Aorta (tissue), 5 donors: ENCODE measurements at regions of chr11 and their contacts with region 1.

Region 1: DNA sequence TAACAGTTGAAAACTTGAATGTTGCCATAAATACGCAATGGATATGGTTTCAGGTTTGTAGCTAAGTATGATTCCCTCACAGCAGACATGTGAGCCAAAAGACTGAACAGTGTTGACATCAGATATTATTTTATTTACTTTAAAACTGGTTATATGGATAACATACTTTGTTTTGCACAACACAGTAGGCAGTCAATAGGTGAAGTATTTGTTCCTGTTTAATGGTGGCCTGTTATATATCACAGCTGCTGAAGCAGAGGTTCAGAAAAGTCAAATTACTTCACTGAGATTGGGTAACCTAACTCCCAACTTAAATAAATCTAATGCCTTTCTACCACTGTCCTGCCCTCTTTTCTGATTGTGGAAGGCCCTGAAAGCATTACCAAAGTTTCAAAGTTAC is 44.6 kb downstream of the YAP1 start:
- DNase-seq: no peak
- ATAC-seq: no peak
- H3K4me3 ChIP-seq: no peak overlapping the region
- H3K27ac ChIP-seq: no peak overlapping the region
- H3K4me1 ChIP-seq: peaks cover 5 to 16% of the 10 kb centered on the region in 2 donors
- H3K27me3 ChIP-seq: no peaks in the 10 kb centered on the region

Region 2: GRCh38 chr11:102115557-102115956 is 39.2 kb before region 1 on chr11:
- intact Hi-C with region 1: loop called in 1 of 2 experiments (anchors 5 kb)
- DNase-seq: no peak
- ATAC-seq: no peak
- H3K4me3 ChIP-seq: peak overlapping the region in 1 of 2 donors; percentile 14
- H3K27ac ChIP-seq: no peak overlapping the region
- H3K4me1 ChIP-seq: peaks cover 3 to 7% of the 10 kb centered on the region in 2 donors
- H3K27me3 ChIP-seq: no peaks in the 10 kb centered on the region

Region 3: GRCh38 chr11:102279641-102280170 is 124.9 kb after region 1 on chr11:
- intact Hi-C with region 1: no loop called
- DNase-seq: no peak
- ATAC-seq: peak; percentile 54
- H3K4me3 ChIP-seq: no peak overlapping the region
- H3K27ac ChIP-seq: peak overlapping the region in 1 of 2 donors; percentile 28
- H3K4me1 ChIP-seq: peaks cover 0 to 3% of the 10 kb centered on the region in 2 donors
- H3K27me3 ChIP-seq: no peaks in the 10 kb centered on the region